ENCODE measurements at regions of chr4 and their contacts with region 1.

Region 1: GRCh38 chr4:39365830-39366771 is at the start of gene RFC1:
- DNase-seq: peak; percentile 73
- H3K4me3 ChIP-seq: peak within 1 kb of the TSS; percentile 94
- H3K27ac ChIP-seq: peak within 1 kb of the TSS; percentile 70
- H3K27me3 ChIP-seq: no peaks in the 10 kb centered on the region
- CTCF ChIP-seq: no peak
- polyA plus RNA-seq, gene RFC1: 25.2 and 35.7 TPM in 2 replicates

Region 2: GRCh38 chr4:39029752-39030694 is 336.1 kb before region 1 on chr4:
- CTCF ChIA-PET with region 1: interaction called, 10 read pairs
- POLR2A ChIA-PET with region 1: no interaction called
- DNase-seq: no peak
- H3K4me3 ChIP-seq: no peak overlapping the region
- H3K27ac ChIP-seq: no peak overlapping the region
- H3K27me3 ChIP-seq: no peaks in the 10 kb centered on the region
- CTCF ChIP-seq: no peak